Naive thymus-derived CD4-positive, alpha-beta T cell (primary cell): ENCODE measurements at regions of chr9 and their contacts with region 1.

Region 1: DNA sequence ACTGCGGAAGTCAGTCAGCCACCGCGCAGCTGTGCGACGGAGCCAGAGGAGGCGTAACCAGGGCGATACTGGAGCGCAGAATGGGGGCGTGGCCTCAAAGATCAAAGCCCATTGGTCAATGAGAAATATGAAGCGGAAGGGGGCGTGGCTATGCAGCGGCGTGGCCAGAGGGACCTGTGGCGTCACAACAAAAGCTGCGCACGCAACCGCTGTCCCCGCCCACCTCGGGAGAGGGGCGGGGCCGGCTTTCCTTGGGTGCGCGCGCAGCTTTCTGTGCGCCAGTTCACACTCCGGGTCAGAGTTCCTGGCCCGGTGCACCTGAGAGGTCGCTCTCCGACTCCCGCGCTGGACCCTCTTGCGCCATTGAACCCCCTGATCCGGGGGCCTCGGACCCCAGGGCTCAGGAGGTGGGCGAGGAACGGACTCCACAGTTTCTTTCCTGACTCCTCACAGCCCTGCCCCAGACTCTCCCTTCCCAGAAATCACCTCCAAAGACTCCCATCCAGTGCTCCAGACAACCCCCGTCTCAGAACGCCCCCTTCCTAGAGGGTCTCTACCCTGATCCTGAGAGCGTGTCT is at the starts of genes GOLGA2 and SWI5:
- DNase-seq: peak; percentile 98 to 100 (median 100)
- ATAC-seq: peak; percentile 98
- H3K4me3 ChIP-seq: peak within 1 kb of the TSS; percentile 95
- H3K4me3 Mint-ChIP-seq: peak within 1 kb of the TSS; percentile 94 to 98 (median 96)
- H3K27ac ChIP-seq: peak within 1 kb of the TSS; percentile 90
- H3K27ac Mint-ChIP-seq: peak within 1 kb of the TSS; percentile 94 to 98 (median 97)
- H3K4me1 ChIP-seq: peaks cover 16 to 21% of the 10 kb centered on the region in 2 donors
- H3K4me1 Mint-ChIP-seq: peaks cover 24 to 51% (median 46%) of the 10 kb centered on the region in 7 donors
- H3K27me3 ChIP-seq: no peaks in the 10 kb centered on the region
- H3K27me3 Mint-ChIP-seq: peaks cover 0 to 7% (median 0%) of the 10 kb centered on the region in 5 donors
- total RNA-seq, gene GOLGA2: 56.5 to 76.6 (median 70.6) TPM
- total RNA-seq, gene SWI5: 8.7 to 17.4 (median 9.8) TPM

Region 2: DNA sequence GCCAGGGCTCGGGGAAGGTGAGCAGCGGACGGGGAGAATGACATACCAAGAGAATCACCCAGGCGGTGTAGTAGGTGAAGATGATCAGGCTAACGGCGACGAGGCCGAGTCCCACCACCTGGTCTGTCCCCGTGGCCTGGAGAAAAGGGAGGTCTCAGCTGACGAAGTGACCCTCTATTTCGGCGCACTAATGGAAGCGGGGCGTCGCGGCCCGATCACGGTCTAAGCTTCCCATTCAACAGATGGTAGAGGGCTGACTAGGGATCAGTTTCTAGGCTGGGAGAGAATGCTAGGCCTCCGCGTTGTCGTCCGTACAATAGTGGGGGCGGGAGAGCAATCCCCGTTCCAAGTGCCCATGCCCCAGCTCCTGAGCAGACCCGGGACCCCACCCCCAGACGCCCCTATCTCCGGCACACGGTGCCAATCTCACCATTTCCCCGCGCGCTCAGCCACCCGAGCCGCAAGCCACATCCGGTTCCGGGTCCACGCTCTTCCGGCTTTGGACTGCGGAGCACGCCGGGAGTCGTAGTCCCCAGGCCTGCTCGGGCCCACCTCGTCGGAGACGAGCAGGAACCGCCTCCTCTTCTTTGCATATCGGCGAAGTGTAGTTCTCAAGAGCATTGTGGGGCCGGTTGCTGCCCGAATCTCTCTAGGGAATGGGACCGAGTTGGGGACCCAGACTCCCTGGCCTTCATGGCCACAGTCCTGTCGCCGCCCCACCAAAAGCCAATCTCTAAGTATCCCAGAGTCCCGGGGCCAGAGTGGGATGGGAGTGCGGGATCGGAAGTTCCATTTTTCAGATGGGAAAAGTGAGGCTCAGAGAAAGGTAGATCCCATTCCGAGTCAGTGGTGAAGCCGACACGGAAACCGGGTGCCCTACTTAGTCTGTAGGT is 338.5 kb before region 1 on chr9 and contains the start of gene DPM2:
- CTCF ChIA-PET with region 1: no interaction called
- POLR2A ChIA-PET with region 1: no interaction called
- intact Hi-C with region 1: no loop called
- DNase-seq: peak; percentile 71 to 90 (median 88)
- ATAC-seq: peak; percentile 96
- H3K4me3 ChIP-seq: peak within 1 kb of the TSS; percentile 88
- H3K4me3 Mint-ChIP-seq: peak within 1 kb of the TSS; percentile 85 to 98 (median 92)
- H3K27ac ChIP-seq: peak within 1 kb of the TSS; percentile 78
- H3K27ac Mint-ChIP-seq: peak within 1 kb of the TSS; percentile 88 to 99 (median 95)
- H3K4me1 ChIP-seq: peaks cover 24 to 25% of the 10 kb centered on the region in 2 donors
- H3K4me1 Mint-ChIP-seq: peaks cover 37 to 61% (median 48%) of the 10 kb centered on the region in 7 donors
- H3K27me3 ChIP-seq: no peaks in the 10 kb centered on the region
- H3K27me3 Mint-ChIP-seq: peaks cover 0 to 4% (median 0%) of the 10 kb centered on the region in 5 donors
- total RNA-seq, gene DPM2: 29.1 to 84.4 (median 56.8) TPM

Region 3: DNA sequence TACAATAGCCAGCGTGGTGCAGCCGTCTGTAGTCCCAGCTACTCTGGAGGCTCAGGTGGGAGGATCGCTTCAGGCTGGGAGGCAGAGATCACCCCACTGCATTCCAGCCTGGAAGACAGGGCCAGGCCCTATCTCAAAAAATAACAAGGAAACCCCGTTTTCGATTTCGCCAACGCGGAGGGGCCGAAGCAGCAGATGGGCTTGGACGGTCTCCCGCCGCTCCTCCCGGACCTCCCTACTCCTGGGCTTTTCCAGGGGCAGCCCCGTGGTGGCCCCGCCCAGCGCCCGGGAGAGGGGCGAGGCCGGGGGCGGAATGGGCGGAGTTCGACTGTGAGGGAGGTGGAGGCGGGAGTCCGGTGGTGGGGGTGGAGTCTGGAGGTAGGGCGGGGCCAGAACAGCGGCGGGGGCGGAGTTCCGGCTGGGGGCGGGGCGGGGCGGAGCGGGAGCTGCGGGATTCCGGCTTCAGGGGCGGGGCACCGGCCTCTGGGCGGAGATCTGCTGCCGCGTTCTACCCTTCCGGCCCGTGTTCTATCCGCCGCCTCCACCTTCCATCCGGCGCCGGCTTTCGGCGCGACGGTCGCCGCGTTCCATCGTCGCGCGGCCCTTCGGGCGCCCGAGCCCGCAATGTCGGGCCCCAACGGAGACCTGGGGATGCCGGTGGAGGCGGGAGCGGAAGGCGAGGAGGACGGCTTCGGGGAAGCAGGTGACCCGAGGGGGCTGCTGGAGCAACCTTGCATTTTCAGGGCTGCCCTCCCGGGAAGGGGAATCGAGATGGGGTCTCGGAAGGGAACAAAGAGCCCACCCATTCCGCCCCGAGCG is 116.1 kb before region 1 on chr9 and contains the start of gene BBLN:
- CTCF ChIA-PET with region 1: no interaction called
- POLR2A ChIA-PET with region 1: interaction called, 4 read pairs
- intact Hi-C with region 1: loop called in 1 of 2 experiments (anchors 1 kb)
- DNase-seq: peak; percentile 78 to 94 (median 87)
- ATAC-seq: peak; percentile 94
- H3K4me3 ChIP-seq: peak within 1 kb of the TSS; percentile 97
- H3K4me3 Mint-ChIP-seq: peak within 1 kb of the TSS; percentile 79 to 90 (median 82)
- H3K27ac ChIP-seq: peak within 1 kb of the TSS; percentile 78
- H3K27ac Mint-ChIP-seq: peak within 1 kb of the TSS; percentile 84 to 95 (median 93)
- H3K4me1 ChIP-seq: peaks cover 11 to 12% of the 10 kb centered on the region in 2 donors
- H3K4me1 Mint-ChIP-seq: peaks cover 0 to 28% (median 21%) of the 10 kb centered on the region in 7 donors
- H3K27me3 ChIP-seq: no peaks in the 10 kb centered on the region
- H3K27me3 Mint-ChIP-seq: no peaks in the 10 kb centered on the region
- total RNA-seq, gene BBLN: 42.7 to 87.8 (median 48.0) TPM

Region 4: GRCh38 chr9:128218518-128219389 is 57.3 kb before region 1 on chr9:
- CTCF ChIA-PET with region 1: no interaction called
- POLR2A ChIA-PET with region 1: interaction called, 5 read pairs
- intact Hi-C with region 1: loop called (anchors 1 kb)
- DNase-seq: peak; percentile 70 to 93 (median 89)
- ATAC-seq: peak; percentile 98
- H3K4me3 ChIP-seq: peak overlapping the region; percentile 62
- H3K4me3 Mint-ChIP-seq: peak overlapping the region; percentile 80 to 93 (median 83)
- H3K27ac ChIP-seq: peak overlapping the region; percentile 47
- H3K27ac Mint-ChIP-seq: peak overlapping the region; percentile 18 to 93 (median 65)
- H3K4me1 ChIP-seq: peaks cover 5 to 7% of the 10 kb centered on the region in 2 donors
- H3K4me1 Mint-ChIP-seq: peaks cover 9 to 13% (median 12%) of the 10 kb centered on the region in 7 donors
- H3K27me3 ChIP-seq: no peaks in the 10 kb centered on the region
- H3K27me3 Mint-ChIP-seq: peaks cover 0 to 8% (median 0%) of the 10 kb centered on the region in 5 donors

Region 5: DNA sequence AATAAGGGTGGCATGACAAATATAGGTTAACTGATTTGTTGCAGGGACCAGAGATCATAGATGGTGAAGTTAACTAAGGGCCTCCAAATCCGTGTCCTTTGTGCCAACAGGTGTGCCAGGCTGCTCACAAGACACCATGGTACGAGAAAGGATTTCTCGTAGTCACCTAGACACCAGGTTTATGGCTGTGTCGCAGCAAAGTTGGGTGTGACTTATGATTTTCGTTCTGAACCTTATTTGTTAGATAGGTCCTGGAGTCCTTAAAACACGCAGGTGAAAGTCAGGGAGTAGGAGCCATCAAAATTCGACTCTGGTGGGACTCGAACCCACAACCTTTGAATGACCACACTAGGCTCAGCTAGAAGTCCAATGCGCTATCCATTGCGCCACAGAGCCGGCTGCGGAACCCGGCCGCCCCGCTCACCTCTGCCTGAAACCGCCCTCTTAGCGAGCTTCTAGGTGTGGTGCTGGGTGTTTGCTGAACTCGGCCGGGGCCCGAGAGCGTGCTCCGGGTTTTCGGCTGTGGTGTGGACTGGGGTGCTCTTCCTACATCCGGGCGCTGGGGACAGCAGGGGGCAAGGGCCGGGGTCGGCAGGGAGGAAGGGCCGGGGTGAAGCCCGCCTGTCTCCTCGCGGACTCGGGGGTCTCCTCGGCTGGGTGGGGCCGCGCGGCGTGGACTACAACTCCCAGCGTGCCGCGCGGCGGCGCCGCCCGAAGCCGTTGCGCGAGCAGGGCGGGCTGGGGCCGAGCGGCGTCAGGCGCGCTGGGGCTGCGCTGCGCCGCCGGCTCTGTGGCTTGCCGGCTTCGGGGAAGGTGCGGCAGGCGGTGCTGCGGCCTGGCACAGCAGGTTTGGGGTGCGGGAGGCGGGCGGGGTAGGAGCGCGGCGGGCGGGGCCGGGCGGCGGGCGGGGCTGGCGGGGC is 63.9 kb after region 1 on chr9 and contains the start of gene SLC27A4:
- CTCF ChIA-PET with region 1: no interaction called
- POLR2A ChIA-PET with region 1: interaction called, 4 read pairs
- intact Hi-C with region 1: loop called in 1 of 2 experiments (anchors 1 kb)
- DNase-seq: peak; percentile 75 to 86 (median 82)
- ATAC-seq: peak; percentile 96
- H3K4me3 ChIP-seq: peak within 1 kb of the TSS; percentile 66
- H3K4me3 Mint-ChIP-seq: peak within 1 kb of the TSS; percentile 87 to 98 (median 95)
- H3K27ac ChIP-seq: peak within 1 kb of the TSS; percentile 69
- H3K27ac Mint-ChIP-seq: peak within 1 kb of the TSS; percentile 70 to 93 (median 90)
- H3K4me1 ChIP-seq: peaks cover 4 to 12% of the 10 kb centered on the region in 2 donors
- H3K4me1 Mint-ChIP-seq: peaks cover 6 to 11% (median 9%) of the 10 kb centered on the region in 7 donors
- H3K27me3 ChIP-seq: no peaks in the 10 kb centered on the region
- H3K27me3 Mint-ChIP-seq: no peaks in the 10 kb centered on the region
- total RNA-seq, gene SLC27A4: 6.4 to 20.1 (median 12.1) TPM

Region 6: DNA sequence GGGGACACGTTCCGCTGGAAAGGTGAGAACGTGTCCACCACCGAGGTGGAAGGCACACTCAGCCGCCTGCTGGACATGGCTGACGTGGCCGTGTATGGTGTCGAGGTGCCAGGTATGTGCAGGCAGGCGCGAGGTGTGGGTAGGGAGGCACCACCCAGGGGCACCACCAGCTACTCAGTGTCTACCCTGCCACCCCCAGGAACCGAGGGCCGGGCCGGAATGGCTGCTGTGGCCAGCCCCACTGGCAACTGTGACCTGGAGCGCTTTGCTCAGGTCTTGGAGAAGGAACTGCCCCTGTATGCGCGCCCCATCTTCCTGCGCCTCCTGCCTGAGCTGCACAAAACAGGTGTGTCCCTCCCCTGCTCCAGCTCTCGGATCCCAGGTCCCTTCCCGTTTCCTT is 79.4 kb after region 1 on chr9:
- CTCF ChIA-PET with region 1: no interaction called
- POLR2A ChIA-PET with region 1: no interaction called
- intact Hi-C with region 1: no loop called
- DNase-seq: no peak
- ATAC-seq: no peak
- H3K4me3 ChIP-seq: no peak overlapping the region
- H3K4me3 Mint-ChIP-seq: no peak overlapping the region
- H3K27ac ChIP-seq: no peak overlapping the region
- H3K27ac Mint-ChIP-seq: no peak overlapping the region
- H3K4me1 ChIP-seq: no peaks in the 10 kb centered on the region
- H3K4me1 Mint-ChIP-seq: no peaks in the 10 kb centered on the region
- H3K27me3 ChIP-seq: no peaks in the 10 kb centered on the region
- H3K27me3 Mint-ChIP-seq: no peaks in the 10 kb centered on the region

Region 7: DNA sequence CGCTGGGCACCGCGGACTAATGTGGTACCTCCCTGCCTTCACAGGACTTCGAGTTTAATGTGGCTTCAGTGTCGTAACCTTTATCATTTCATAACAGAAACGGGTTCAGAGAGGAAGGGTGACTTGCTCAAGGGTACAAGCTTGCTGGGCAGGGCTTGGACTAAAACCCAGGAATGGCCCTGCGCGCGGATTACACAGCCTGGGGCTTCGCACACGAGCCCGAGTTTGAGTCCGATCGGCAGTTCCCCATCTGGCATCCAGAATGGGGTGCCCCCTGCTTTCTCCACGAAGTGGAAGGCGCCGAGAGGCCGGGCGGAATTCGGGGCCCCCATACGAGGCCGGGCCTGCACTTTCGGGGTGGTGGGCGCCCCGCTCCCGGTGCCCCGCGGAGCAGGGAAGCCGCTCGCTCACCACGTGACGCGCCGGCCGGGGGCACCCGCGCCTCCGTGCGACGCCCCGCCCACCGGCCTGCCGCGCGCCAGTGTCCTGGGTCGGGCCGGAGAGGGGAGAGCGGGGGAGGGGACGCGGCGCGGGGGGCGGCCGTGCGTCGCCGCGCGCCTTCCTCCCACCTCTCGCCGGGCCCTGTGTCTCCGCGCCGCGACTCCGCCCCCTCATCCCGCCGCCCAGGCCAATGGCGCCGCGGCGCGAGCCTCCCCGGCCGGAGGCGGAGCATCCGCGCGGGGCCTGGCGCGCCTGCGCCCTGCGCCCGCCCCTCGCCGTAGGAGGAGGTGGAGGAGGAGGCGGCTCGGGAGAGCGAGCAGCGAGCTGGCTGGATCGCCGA is 412.6 kb after region 1 on chr9 and contains the start of gene SET:
- CTCF ChIA-PET with region 1: no interaction called
- POLR2A ChIA-PET with region 1: no interaction called
- intact Hi-C with region 1: loop called (anchors 5 to 10 kb)
- DNase-seq: peak; percentile 86 to 97 (median 93)
- ATAC-seq: peak; percentile 89
- H3K4me3 ChIP-seq: peak within 1 kb of the TSS; percentile 84
- H3K4me3 Mint-ChIP-seq: peak within 1 kb of the TSS; percentile 86 to 99 (median 90)
- H3K27ac ChIP-seq: peak within 1 kb of the TSS; percentile 85
- H3K27ac Mint-ChIP-seq: peak within 1 kb of the TSS; percentile 87 to 99 (median 97)
- H3K4me1 ChIP-seq: peaks cover 22 to 48% of the 10 kb centered on the region in 2 donors
- H3K4me1 Mint-ChIP-seq: peaks cover 45 to 67% (median 59%) of the 10 kb centered on the region in 7 donors
- H3K27me3 ChIP-seq: no peaks in the 10 kb centered on the region
- H3K27me3 Mint-ChIP-seq: no peaks in the 10 kb centered on the region
- total RNA-seq, gene SET: 222 to 488 (median 270) TPM

Region 8: GRCh38 chr9:129028192-129028957 is 752.3 kb after region 1 on chr9 and contains the start of gene SH3GLB2:
- CTCF ChIA-PET with region 1: no interaction called
- POLR2A ChIA-PET with region 1: no interaction called
- intact Hi-C with region 1: loop called in 1 of 2 experiments (anchors 1 kb)
- DNase-seq: peak in 8 of 9 donors; percentile 81 to 97 (median 88)
- ATAC-seq: peak; percentile 94
- H3K4me3 ChIP-seq: peak within 1 kb of the TSS; percentile 76
- H3K4me3 Mint-ChIP-seq: peak within 1 kb of the TSS; percentile 81 to 92 (median 83)
- H3K27ac ChIP-seq: peak within 1 kb of the TSS; percentile 72
- H3K27ac Mint-ChIP-seq: peak within 1 kb of the TSS; percentile 62 to 90 (median 78)
- H3K4me1 ChIP-seq: peaks cover 13 to 18% of the 10 kb centered on the region in 2 donors
- H3K4me1 Mint-ChIP-seq: peaks cover 13 to 37% (median 25%) of the 10 kb centered on the region in 7 donors
- H3K27me3 ChIP-seq: no peaks in the 10 kb centered on the region
- H3K27me3 Mint-ChIP-seq: no peaks in the 10 kb centered on the region
- total RNA-seq, gene SH3GLB2: 76.3 to 106 (median 86.2) TPM

Region 9: DNA sequence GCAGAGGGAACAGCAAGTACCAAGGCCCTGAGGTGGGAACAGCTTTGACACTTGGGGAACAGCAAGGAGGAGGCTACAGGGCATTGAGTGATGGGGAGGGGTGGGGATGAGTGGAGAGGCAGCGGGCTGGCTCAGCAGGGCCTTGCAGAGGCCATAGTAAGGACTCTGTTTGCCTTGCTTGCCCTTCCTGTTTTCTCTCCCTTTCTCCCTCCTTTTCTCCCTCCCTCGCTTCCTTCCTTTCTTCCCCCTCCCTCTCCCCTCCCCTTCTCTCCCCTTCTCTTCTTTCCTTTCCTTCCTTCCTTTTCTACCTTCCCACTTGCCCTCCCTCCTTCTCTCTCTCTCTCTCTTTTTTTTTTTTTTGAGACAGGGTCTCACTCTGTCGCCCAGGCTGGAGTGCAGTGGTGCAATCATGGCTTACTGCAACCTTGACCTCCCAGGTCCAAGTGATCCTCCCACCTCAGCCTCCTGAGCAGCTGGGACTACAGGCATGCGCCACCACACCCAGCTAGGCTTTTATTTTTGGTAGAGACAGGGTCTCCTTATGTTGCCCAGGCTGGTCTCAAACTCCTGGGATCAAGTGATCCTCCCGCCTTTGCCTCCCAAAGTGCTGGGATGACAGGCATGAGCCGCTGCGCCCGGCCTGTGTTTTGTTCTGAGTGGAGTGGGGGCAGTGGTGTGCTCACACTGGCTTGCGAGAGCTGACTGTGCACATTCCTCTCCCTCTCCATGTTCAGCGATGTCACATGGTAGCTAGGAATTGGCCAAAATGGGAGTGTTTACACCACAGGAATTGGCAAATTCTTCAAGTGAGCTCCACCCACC is 884.8 kb after region 1 on chr9:
- CTCF ChIA-PET with region 1: no interaction called
- POLR2A ChIA-PET with region 1: no interaction called
- intact Hi-C with region 1: no loop called
- DNase-seq: no peak
- ATAC-seq: no peak
- H3K4me3 ChIP-seq: no peak overlapping the region
- H3K4me3 Mint-ChIP-seq: no peak overlapping the region
- H3K27ac ChIP-seq: no peak overlapping the region
- H3K27ac Mint-ChIP-seq: peak overlapping the region in 1 of 9 donors; percentile 31
- H3K4me1 ChIP-seq: no peaks in the 10 kb centered on the region
- H3K4me1 Mint-ChIP-seq: peaks cover 0 to 6% (median 0%) of the 10 kb centered on the region in 7 donors
- H3K27me3 ChIP-seq: no peaks in the 10 kb centered on the region
- H3K27me3 Mint-ChIP-seq: no peaks in the 10 kb centered on the region